Activated B cell treated with CpG ODN at 0.5 μM for 24 hours (primary cell): ENCODE measurements at regions of chr1 and their contacts with region 1.

Region 1: GRCh38 chr1:23591460-23592208 is 32.3 kb upstream of the ID3 start:
- DNase-seq: peak; percentile 67
- ATAC-seq: peak; percentile 80
- H3K4me3 Mint-ChIP-seq: peak overlapping the region; percentile 74
- H3K27ac Mint-ChIP-seq: peak overlapping the region; percentile 89
- H3K4me1 Mint-ChIP-seq: peaks cover 87% of the 10 kb centered on the region
- H3K27me3 Mint-ChIP-seq: no peaks in the 10 kb centered on the region
- CTCF ChIP-seq: no peak

Region 2: GRCh38 chr1:22592919-22593790 is 998.5 kb before region 1 on chr1:
- CTCF ChIA-PET with region 1: no interaction called
- POLR2A ChIA-PET with region 1: no interaction called
- intact Hi-C with region 1: no loop called
- DNase-seq: no peak
- ATAC-seq: no peak
- H3K4me3 Mint-ChIP-seq: no peak overlapping the region
- H3K27ac Mint-ChIP-seq: no peak overlapping the region
- H3K4me1 Mint-ChIP-seq: no peaks in the 10 kb centered on the region
- H3K27me3 Mint-ChIP-seq: peaks cover 27% of the 10 kb centered on the region
- CTCF ChIP-seq: no peak

Region 3: GRCh38 chr1:23613191-23614031 is 21.8 kb after region 1 on chr1:
- CTCF ChIA-PET with region 1: interaction called, 5 read pairs
- POLR2A ChIA-PET with region 1: interaction called, 151 read pairs
- intact Hi-C with region 1: no loop called
- DNase-seq: peak; percentile 44
- ATAC-seq: peak; percentile 38
- H3K4me3 Mint-ChIP-seq: no peak overlapping the region
- H3K27ac Mint-ChIP-seq: peak overlapping the region; percentile 92
- H3K4me1 Mint-ChIP-seq: peaks cover 85% of the 10 kb centered on the region
- H3K27me3 Mint-ChIP-seq: no peaks in the 10 kb centered on the region
- CTCF ChIP-seq: no peak

Region 4: GRCh38 chr1:23619299-23620188 is 27.9 kb after region 1 on chr1:
- CTCF ChIA-PET with region 1: interaction called, 7 read pairs
- POLR2A ChIA-PET with region 1: interaction called, 151 read pairs
- intact Hi-C with region 1: loop called (anchors 1 kb)
- DNase-seq: peak; percentile 75
- ATAC-seq: peak; percentile 81
- H3K4me3 Mint-ChIP-seq: peak overlapping the region; percentile 81
- H3K27ac Mint-ChIP-seq: peak overlapping the region; percentile 91
- H3K4me1 Mint-ChIP-seq: peaks cover 92% of the 10 kb centered on the region
- H3K27me3 Mint-ChIP-seq: no peaks in the 10 kb centered on the region
- CTCF ChIP-seq: no peak

Region 5: DNA sequence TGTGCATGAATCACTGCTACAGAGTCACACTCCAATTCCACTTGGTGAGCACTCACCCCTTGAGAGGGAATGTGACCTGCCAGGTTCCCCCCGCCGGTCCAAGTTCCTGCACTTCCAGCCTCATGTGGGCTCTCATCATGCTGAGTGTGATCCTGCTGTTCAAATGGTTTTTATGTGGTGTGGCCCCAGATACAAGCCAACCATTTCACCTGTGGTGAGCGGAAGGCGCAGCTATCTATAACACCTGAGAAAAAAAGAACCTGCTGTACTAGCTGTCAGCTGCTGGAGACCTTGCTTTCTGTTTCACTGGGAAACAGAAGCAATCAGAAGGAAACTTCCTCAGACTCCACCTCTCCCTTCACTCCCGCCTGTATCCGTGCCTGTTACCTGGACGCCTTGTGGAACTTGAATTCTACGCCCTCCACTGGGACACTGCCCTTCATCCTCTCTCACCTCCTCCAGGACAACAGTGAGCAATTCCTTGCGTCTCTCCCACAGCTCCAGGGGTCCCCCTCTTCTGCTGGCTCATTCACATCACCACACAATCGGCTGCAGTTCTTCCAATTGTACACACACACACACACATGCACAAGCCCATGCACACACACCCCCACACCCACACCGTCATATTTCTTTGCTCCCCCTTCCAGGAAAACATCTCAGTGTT is 35.6 kb after region 1 on chr1:
- CTCF ChIA-PET with region 1: interaction called, 46 read pairs
- POLR2A ChIA-PET with region 1: interaction called, 151 read pairs
- intact Hi-C with region 1: no loop called
- DNase-seq: no peak
- ATAC-seq: peak; percentile 14
- H3K4me3 Mint-ChIP-seq: peak overlapping the region; percentile 65
- H3K27ac Mint-ChIP-seq: peak overlapping the region; percentile 84
- H3K4me1 Mint-ChIP-seq: peaks cover 81% of the 10 kb centered on the region
- H3K27me3 Mint-ChIP-seq: no peaks in the 10 kb centered on the region
- CTCF ChIP-seq: no peak